ENCODE measurements at regions of chr6 and their contacts with region 1.

Region 1: DNA sequence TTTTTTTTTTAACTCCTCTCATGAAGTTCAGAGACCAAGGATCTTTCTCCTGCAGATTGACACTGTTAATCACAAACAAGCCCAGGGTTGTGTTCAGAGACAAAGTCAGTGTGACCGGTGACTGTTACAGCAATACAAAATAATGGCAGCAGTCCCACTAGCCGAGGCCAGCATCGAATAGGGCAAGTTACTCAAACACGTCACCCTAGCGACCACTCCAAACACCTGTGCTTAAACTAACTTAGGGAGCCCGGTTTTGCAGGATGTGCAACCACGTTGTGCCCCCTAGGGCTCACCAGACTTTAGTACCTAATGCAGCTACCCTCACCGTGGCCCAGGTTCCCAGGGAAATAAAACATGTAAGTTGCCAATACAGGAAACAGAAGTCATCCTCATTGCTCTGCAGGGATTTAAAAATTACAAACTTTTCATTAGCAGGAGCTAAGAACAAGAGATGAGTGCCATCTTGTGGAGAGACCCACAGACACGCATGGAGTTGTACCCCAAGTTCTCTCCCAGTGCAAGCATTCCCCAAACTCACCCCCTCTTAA is 38.1 kb downstream of the FAM50B start:
- DNase-seq: no peak
- ATAC-seq: peak; percentile 28
- H3K4me3 ChIP-seq: no peak overlapping the region
- H3K27ac ChIP-seq: no peak overlapping the region
- H3K4me1 ChIP-seq: peaks cover 11% of the 10 kb centered on the region
- H3K27me3 ChIP-seq: no peaks in the 10 kb centered on the region
- CTCF ChIP-seq: peak; percentile 61

Region 2: DNA sequence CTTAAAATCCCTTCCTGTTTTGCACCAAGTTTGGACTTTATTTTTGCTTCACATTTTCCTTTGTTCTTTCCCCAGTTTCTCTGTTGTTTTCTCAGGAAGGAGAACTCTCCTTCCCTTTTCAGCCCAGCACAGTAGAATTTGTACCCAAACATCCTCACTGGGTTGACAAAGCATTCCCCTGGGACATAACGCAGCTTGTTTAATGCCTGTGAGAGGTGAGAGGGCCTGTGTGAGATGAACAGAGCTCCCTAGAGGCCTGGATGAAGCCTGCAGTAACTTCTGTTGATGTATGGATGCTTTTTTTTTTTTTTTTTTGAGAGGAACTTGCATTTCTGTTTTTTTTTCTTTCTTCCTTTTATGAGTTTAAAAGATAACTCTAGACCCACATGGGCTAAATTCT is 325.5 kb before region 1 on chr6:
- CTCF ChIA-PET with region 1: interaction called, 13 read pairs
- POLR2A ChIA-PET with region 1: no interaction called
- in situ Hi-C with region 1: no loop called
- intact Hi-C with region 1: no loop called
- DNase-seq: no peak
- ATAC-seq: no peak
- H3K4me3 ChIP-seq: no peak overlapping the region
- H3K27ac ChIP-seq: no peak overlapping the region
- H3K4me1 ChIP-seq: no peaks in the 10 kb centered on the region
- H3K27me3 ChIP-seq: peaks cover 2% of the 10 kb centered on the region; the same call in 1 of the 2 replicates
- CTCF ChIP-seq: 0 out of 2 replicates have a peak, but pooled peaks have one; percentile 27

Region 3: DNA sequence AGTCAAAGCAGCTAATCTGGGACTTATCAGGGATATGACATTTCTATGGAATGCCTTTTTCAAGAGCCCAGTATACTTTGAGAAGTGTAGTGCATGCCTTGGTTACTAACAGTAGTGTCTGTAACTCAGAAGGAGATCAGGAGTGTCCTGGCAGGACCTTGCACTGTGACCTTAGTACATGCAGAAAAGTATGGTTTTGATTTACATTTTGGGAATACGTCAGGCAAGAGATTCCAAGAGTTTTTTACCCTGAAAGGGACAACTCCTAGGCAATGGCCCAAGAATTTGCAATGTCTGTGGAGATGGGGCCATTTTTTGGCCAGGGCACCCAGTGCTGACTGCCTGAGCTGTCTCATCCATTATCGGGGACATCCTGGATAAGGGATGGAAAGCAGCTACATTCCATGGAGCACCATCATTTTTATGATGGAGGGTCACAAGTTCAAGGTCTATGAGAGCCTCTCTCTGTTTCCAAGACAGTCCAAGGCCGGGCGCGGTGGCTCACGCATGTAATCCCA is 42.1 kb after region 1 on chr6:
- CTCF ChIA-PET with region 1: interaction called, 14 read pairs
- POLR2A ChIA-PET with region 1: no interaction called
- in situ Hi-C with region 1: no loop called
- intact Hi-C with region 1: no loop called
- DNase-seq: no peak
- ATAC-seq: no peak
- H3K4me3 ChIP-seq: no peak overlapping the region
- H3K27ac ChIP-seq: no peak overlapping the region
- H3K4me1 ChIP-seq: 0 out of 2 replicates have a peak, but pooled peaks cover 3% of the 10 kb centered on the region
- H3K27me3 ChIP-seq: no peaks in the 10 kb centered on the region
- CTCF ChIP-seq: no peak

Region 4: GRCh38 chr6:4420160-4420865 is 533.1 kb after region 1 on chr6:
- CTCF ChIA-PET with region 1: no interaction called
- POLR2A ChIA-PET with region 1: no interaction called
- in situ Hi-C with region 1: no loop called
- intact Hi-C with region 1: no loop called
- DNase-seq: no peak
- ATAC-seq: no peak
- H3K4me3 ChIP-seq: no peak overlapping the region
- H3K27ac ChIP-seq: no peak overlapping the region
- H3K4me1 ChIP-seq: no peaks in the 10 kb centered on the region
- H3K27me3 ChIP-seq: no peaks in the 10 kb centered on the region
- CTCF ChIP-seq: no peak

Region 5: GRCh38 chr6:5645328-5646290 is 1758.4 kb after region 1 on chr6:
- CTCF ChIA-PET with region 1: no interaction called
- POLR2A ChIA-PET with region 1: no interaction called
- in situ Hi-C with region 1: no loop called
- intact Hi-C with region 1: no loop called
- DNase-seq: no peak
- ATAC-seq: no peak
- H3K4me3 ChIP-seq: no peak overlapping the region
- H3K27ac ChIP-seq: no peak overlapping the region
- H3K4me1 ChIP-seq: no peaks in the 10 kb centered on the region
- H3K27me3 ChIP-seq: no peaks in the 10 kb centered on the region
- CTCF ChIP-seq: no peak

Measured in Panc1 (cell line).